ENCODE measurements at regions of chr3 and their contacts with region 1.

Region 1: GRCh38 chr3:100719136-100719535 is 9.8 kb downstream of the TFG start:
- DNase-seq: no peak
- ATAC-seq: no peak

Region 2: GRCh38 chr3:100754563-100755334 is 35.6 kb after region 1 on chr3:
- intact Hi-C with region 1: loop called (anchors 5 kb)
- DNase-seq: no peak
- ATAC-seq: peak; percentile 47